ENCODE measurements at regions of chr22 and their contacts with region 1.

Region 1: GRCh38 chr22:31474743-31475142 is 14.9 kb downstream of the EIF4ENIF1 start:
- DNase-seq: no peak
- H3K4me3 ChIP-seq: no peak overlapping the region
- H3K27ac ChIP-seq: no peak overlapping the region
- H3K4me1 ChIP-seq: no peaks in the 10 kb centered on the region
- H3K27me3 ChIP-seq: no peaks in the 10 kb centered on the region
- CTCF ChIP-seq: no peak

Region 2: GRCh38 chr22:31378123-31378522 is 96.6 kb before region 1 on chr22:
- CTCF ChIA-PET with region 1: no interaction called
- POLR2A ChIA-PET with region 1: no interaction called
- intact Hi-C with region 1: no loop called
- DNase-seq: no peak
- H3K4me3 ChIP-seq: no peak overlapping the region
- H3K27ac ChIP-seq: no peak overlapping the region
- H3K4me1 ChIP-seq: no peaks in the 10 kb centered on the region
- H3K27me3 ChIP-seq: no peaks in the 10 kb centered on the region
- CTCF ChIP-seq: no peak

Region 3: GRCh38 chr22:31451709-31452571 is 22.8 kb before region 1 on chr22:
- CTCF ChIA-PET with region 1: interaction called, 12 read pairs
- POLR2A ChIA-PET with region 1: no interaction called
- intact Hi-C with region 1: no loop called
- DNase-seq: peak in 1 of 2 experiments; percentile 45
- H3K4me3 ChIP-seq: no peak overlapping the region
- H3K27ac ChIP-seq: no peak overlapping the region
- H3K4me1 ChIP-seq: no peaks in the 10 kb centered on the region
- H3K27me3 ChIP-seq: no peaks in the 10 kb centered on the region
- CTCF ChIP-seq: peak; percentile 65; the same call in 1 of the 2 replicates

Region 4: GRCh38 chr22:31509061-31509762 is 34.5 kb after region 1 on chr22:
- CTCF ChIA-PET with region 1: no interaction called
- POLR2A ChIA-PET with region 1: no interaction called
- intact Hi-C with region 1: no loop called
- DNase-seq: no peak
- H3K4me3 ChIP-seq: no peak overlapping the region
- H3K27ac ChIP-seq: no peak overlapping the region
- H3K4me1 ChIP-seq: no peaks in the 10 kb centered on the region
- H3K27me3 ChIP-seq: no peaks in the 10 kb centered on the region
- CTCF ChIP-seq: no peak